PC-3 (cell line): ENCODE measurements at regions of chr5 and their contacts with region 1.

Region 1: DNA sequence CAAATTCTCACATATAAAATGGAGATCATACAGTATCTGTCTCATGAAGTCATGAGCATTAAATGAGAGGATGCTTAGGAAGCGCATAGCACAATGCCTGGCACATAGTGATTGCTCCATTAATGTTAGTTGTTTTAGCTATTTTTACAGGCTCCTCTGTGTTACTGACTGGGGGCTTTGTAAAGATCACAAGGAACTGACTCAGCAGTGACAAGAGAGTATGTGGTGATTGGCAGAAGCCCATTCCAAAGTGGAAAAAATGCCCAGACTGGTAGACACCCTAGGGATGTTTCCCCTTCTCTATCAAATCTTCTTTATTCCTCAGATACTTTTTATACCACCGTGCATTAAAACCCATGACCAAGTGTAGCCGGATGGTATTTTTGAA is 33.5 kb downstream of the ABLIM3 start:
- DNase-seq: peak; percentile 68
- ATAC-seq: peak; percentile 28
- H3K4me3 ChIP-seq: peak overlapping the region; percentile 6; the same call in 1 of the 2 replicates
- H3K27ac ChIP-seq: peak overlapping the region; percentile 86
- H3K4me1 ChIP-seq: peaks cover 47% of the 10 kb centered on the region
- H3K27me3 ChIP-seq: no peaks in the 10 kb centered on the region
- CTCF ChIP-seq: no peak

Region 2: GRCh38 chr5:149133795-149134780 is 40.8 kb before region 1 on chr5:
- CTCF ChIA-PET with region 1: interaction called, 4 read pairs
- POLR2A ChIA-PET with region 1: interaction called, 4 read pairs
- intact Hi-C with region 1: loop called (anchors 1 kb)
- DNase-seq: peak; percentile 100
- ATAC-seq: peak; percentile 76
- H3K4me3 ChIP-seq: peak overlapping the region; percentile 1; the same call in 1 of the 2 replicates
- H3K27ac ChIP-seq: peak overlapping the region; percentile 86
- H3K4me1 ChIP-seq: peaks cover 64% of the 10 kb centered on the region
- H3K27me3 ChIP-seq: no peaks in the 10 kb centered on the region
- CTCF ChIP-seq: no peak

Region 3: DNA sequence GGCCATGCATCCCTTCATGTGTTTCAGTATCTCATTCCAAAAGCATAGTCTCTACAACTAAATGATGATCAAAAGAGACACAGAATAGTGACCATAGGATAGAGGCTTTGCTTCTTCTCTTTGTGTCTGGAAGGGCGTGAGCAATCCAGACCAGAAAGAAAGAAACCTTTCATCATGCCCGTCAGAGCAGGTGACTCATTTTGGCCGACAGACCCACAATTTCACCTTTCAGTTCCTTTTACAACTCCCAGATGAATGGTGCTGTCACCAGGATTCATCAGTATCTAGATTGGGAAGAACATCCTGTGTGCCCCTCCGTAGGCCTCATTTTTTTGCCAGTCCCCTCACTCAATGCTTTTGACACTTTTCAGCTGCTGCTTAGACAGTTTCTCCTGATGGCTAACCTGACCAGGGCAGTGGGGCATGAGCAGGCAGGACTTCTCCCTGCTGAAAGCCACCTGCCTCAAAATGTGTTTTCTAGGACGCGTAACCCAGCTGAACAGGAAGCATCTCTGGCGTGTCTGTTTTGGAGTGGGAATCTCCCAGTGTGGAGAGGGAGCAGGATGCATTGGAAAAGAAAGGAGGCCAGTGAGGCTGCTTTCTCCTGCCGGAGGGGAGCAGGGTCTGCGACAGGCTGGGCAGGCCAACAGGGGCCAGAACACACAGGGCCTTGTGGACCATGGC is 12.3 kb before region 1 on chr5:
- CTCF ChIA-PET with region 1: no interaction called
- POLR2A ChIA-PET with region 1: no interaction called
- intact Hi-C with region 1: loop called (anchors 1 kb)
- DNase-seq: peak; percentile 98
- ATAC-seq: peak; percentile 92
- H3K4me3 ChIP-seq: no peak overlapping the region
- H3K27ac ChIP-seq: peak overlapping the region; percentile 72
- H3K4me1 ChIP-seq: peaks cover 35% of the 10 kb centered on the region
- H3K27me3 ChIP-seq: no peaks in the 10 kb centered on the region
- CTCF ChIP-seq: no peak

Region 4: GRCh38 chr5:149185067-149185466 is 10.2 kb after region 1 on chr5:
- CTCF ChIA-PET with region 1: no interaction called
- POLR2A ChIA-PET with region 1: no interaction called
- intact Hi-C with region 1: loop called (anchors 1 kb)
- DNase-seq: no peak
- ATAC-seq: no peak
- H3K4me3 ChIP-seq: no peak overlapping the region
- H3K27ac ChIP-seq: no peak overlapping the region
- H3K4me1 ChIP-seq: peaks cover 30% of the 10 kb centered on the region
- H3K27me3 ChIP-seq: no peaks in the 10 kb centered on the region
- CTCF ChIP-seq: no peak

Region 5: DNA sequence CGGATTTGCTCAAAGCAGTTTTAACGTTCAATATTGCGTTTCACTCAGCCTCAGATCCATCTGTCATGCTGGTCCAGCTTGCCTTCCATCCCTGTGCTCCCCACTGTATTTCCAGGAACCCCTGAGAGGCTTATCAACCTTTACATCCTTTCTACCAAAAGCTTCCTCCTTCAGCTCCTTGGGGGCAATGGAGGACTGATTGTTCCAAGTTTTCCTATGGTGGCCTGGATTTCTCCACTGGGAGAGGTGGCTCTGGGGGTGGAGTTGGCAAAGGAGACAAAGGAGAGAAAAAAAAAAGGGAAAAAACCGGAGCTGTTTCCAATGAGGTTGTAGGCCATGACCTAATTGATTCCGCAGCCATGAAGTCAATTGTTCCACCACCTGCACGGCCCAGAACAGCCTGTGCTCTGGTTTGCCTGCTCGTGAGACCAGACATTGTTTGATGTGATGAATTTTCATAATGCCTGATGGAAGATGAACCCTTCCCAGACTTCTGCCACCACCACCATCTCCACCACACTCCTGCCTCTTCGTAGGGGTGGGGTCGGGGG is 20.6 kb after region 1 on chr5:
- CTCF ChIA-PET with region 1: no interaction called
- POLR2A ChIA-PET with region 1: no interaction called
- intact Hi-C with region 1: no loop called
- DNase-seq: no peak
- ATAC-seq: no peak
- H3K4me3 ChIP-seq: no peak overlapping the region
- H3K27ac ChIP-seq: no peak overlapping the region
- H3K4me1 ChIP-seq: no peaks in the 10 kb centered on the region
- H3K27me3 ChIP-seq: no peaks in the 10 kb centered on the region
- CTCF ChIP-seq: no peak